ENCODE measurements at regions of chr7 and their contacts with region 1.

Region 1: GRCh38 chr7:85030893-85031292 is 156.0 kb downstream of the SEMA3D start:
- DNase-seq: no peak
- H3K4me3 ChIP-seq: no peak overlapping the region
- H3K27ac ChIP-seq: no peak overlapping the region
- H3K4me1 ChIP-seq: no peaks in the 10 kb centered on the region
- H3K27me3 ChIP-seq: no peaks in the 10 kb centered on the region
- CTCF ChIP-seq: peak in 2 of 3 experiments; percentile 31 to 51

Region 2: GRCh38 chr7:84916161-84916560 is 114.7 kb before region 1 on chr7:
- intact Hi-C with region 1: no loop called
- DNase-seq: no peak
- H3K4me3 ChIP-seq: no peak overlapping the region
- H3K27ac ChIP-seq: no peak overlapping the region
- H3K4me1 ChIP-seq: no peaks in the 10 kb centered on the region
- H3K27me3 ChIP-seq: no peaks in the 10 kb centered on the region
- CTCF ChIP-seq: no peak

Region 3: GRCh38 chr7:85464042-85464651 is 433.3 kb after region 1 on chr7:
- intact Hi-C with region 1: loop called (anchors 10 kb)
- DNase-seq: no peak
- H3K4me3 ChIP-seq: no peak overlapping the region
- H3K27ac ChIP-seq: no peak overlapping the region
- H3K4me1 ChIP-seq: no peaks in the 10 kb centered on the region
- H3K27me3 ChIP-seq: no peaks in the 10 kb centered on the region
- CTCF ChIP-seq: no peak

Region 4: GRCh38 chr7:85851571-85852193 is 820.8 kb after region 1 on chr7:
- intact Hi-C with region 1: loop called (anchors 5 kb)
- DNase-seq: no peak
- H3K4me3 ChIP-seq: no peak overlapping the region
- H3K27ac ChIP-seq: no peak overlapping the region
- H3K4me1 ChIP-seq: no peaks in the 10 kb centered on the region
- H3K27me3 ChIP-seq: no peaks in the 10 kb centered on the region
- CTCF ChIP-seq: peak in 2 of 3 experiments; percentile 13 to 29